CD4-positive, alpha-beta memory T cell (primary cell): ENCODE measurements at regions of chr5 and their contacts with region 1.

Region 1: GRCh38 chr5:56814963-56815658 is at the start of gene MAP3K1:
- DNase-seq: peak; percentile 82 to 91 (median 88)
- H3K4me3 ChIP-seq: peak within 1 kb of the TSS; percentile 78 to 87
- H3K4me3 Mint-ChIP-seq: peak within 1 kb of the TSS; percentile 92 to 97 (median 94)
- H3K27ac ChIP-seq: peak within 1 kb of the TSS; percentile 90
- H3K27ac Mint-ChIP-seq: peak within 1 kb of the TSS; percentile 94 to 99 (median 96)
- H3K4me1 ChIP-seq: peaks cover 37% of the 10 kb centered on the region
- H3K4me1 Mint-ChIP-seq: peaks cover 16 to 47% (median 26%) of the 10 kb centered on the region in 4 donors
- H3K27me3 ChIP-seq: no peaks in the 10 kb centered on the region
- H3K27me3 Mint-ChIP-seq: no peaks in the 10 kb centered on the region
- total RNA-seq, gene MAP3K1: 139 to 146 TPM

Region 2: DNA sequence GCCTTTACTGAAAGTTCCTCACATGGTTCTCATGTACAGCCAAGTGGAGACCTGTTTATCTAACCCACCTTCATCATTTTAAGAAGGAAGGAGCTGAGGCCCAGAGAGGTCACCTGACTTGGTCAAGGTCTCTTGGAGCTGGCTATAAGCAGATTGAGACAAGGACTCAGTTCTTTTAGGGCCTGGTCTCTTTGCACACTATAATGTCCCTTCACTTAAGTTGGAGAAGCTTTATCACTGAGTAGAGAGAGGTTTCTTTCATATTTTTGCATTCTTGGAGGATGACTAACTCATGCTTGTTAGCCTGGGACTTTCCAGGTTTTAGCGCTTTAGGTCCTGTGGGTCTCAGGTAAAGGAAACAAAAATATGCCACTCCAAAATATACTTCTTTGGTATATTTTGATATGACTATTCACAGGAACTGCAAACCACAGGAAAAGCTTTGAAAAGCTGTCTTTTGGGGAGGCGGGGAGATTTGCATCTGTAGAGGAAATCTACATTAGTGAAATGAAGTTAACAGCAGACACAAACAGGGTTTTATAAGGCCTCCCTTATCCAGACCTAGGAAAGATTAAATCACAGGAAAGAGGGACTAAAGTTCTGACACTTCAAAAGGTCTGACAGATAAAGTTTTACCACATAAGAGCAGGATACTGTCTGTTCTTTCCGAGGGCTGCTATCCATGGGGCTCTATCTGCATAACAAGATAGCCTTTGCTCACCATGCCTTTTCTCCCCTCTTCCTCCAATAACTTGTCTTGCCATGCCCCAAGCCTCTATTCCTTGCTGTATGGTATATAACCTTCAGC is 486.2 kb before region 1 on chr5:
- CTCF ChIA-PET with region 1: no interaction called
- POLR2A ChIA-PET with region 1: interaction called, 10 read pairs
- intact Hi-C with region 1: loop called (anchors 2 kb)
- DNase-seq: peak; percentile 50 to 82 (median 73)
- H3K4me3 ChIP-seq: no peak overlapping the region
- H3K4me3 Mint-ChIP-seq: peak overlapping the region; percentile 47 to 80 (median 61)
- H3K27ac ChIP-seq: peak overlapping the region; percentile 67
- H3K27ac Mint-ChIP-seq: peak overlapping the region; percentile 58 to 91 (median 76)
- H3K4me1 ChIP-seq: peaks cover 59% of the 10 kb centered on the region
- H3K4me1 Mint-ChIP-seq: peaks cover 45 to 69% (median 59%) of the 10 kb centered on the region in 4 donors
- H3K27me3 ChIP-seq: no peaks in the 10 kb centered on the region
- H3K27me3 Mint-ChIP-seq: no peaks in the 10 kb centered on the region

Region 3: GRCh38 chr5:56494300-56494731 is 320.8 kb before region 1 on chr5:
- CTCF ChIA-PET with region 1: no interaction called
- POLR2A ChIA-PET with region 1: no interaction called
- intact Hi-C with region 1: no loop called
- DNase-seq: no peak
- H3K4me3 ChIP-seq: no peak overlapping the region
- H3K4me3 Mint-ChIP-seq: no peak overlapping the region
- H3K27ac ChIP-seq: no peak overlapping the region
- H3K27ac Mint-ChIP-seq: no peak overlapping the region
- H3K4me1 ChIP-seq: peaks cover 32% of the 10 kb centered on the region
- H3K4me1 Mint-ChIP-seq: peaks cover 7 to 40% (median 21%) of the 10 kb centered on the region in 4 donors
- H3K27me3 ChIP-seq: no peaks in the 10 kb centered on the region
- H3K27me3 Mint-ChIP-seq: no peaks in the 10 kb centered on the region

Region 4: GRCh38 chr5:56670118-56670483 is 145.0 kb before region 1 on chr5:
- CTCF ChIA-PET with region 1: interaction called, 6 read pairs
- POLR2A ChIA-PET with region 1: interaction called, 12 read pairs
- intact Hi-C with region 1: no loop called
- DNase-seq: peak in 4 of 5 donors; percentile 26 to 67 (median 48)
- H3K4me3 ChIP-seq: no peak overlapping the region
- H3K4me3 Mint-ChIP-seq: peak overlapping the region in 7 of 8 donors; percentile 54 to 89 (median 76)
- H3K27ac ChIP-seq: peak overlapping the region; percentile 48
- H3K27ac Mint-ChIP-seq: peak overlapping the region; percentile 89 to 97 (median 93)
- H3K4me1 ChIP-seq: peaks cover 54% of the 10 kb centered on the region
- H3K4me1 Mint-ChIP-seq: peaks cover 23 to 52% (median 44%) of the 10 kb centered on the region in 4 donors
- H3K27me3 ChIP-seq: no peaks in the 10 kb centered on the region
- H3K27me3 Mint-ChIP-seq: no peaks in the 10 kb centered on the region

Region 5: DNA sequence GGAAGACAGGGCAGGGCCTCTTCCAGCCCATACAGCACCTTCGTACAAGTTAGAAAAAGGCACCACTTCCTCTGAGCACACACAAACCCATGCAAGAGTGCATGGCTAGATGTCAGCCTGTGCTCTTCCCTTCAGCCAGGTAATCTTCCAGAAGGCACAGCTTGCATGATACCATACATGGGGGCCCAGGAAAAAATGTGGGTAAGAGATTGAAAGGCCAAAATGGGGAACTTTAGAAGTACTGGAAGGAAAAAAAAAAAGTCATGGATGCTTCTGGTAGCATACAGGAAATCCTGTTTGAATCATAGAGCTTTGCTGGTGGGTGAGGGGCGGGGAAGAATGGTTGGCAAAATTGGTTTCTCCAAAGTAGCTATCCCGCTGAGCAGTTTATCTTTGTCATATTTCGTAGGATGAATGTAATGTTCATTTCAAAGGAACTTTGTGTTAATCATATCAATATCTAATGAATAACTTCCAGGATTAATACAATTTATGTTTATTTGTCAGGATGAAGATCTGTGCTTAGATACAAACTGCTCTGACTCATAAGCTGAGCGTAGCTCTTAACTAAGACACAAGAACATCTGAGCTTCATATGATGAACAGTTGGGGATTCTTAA is 78.0 kb before region 1 on chr5:
- CTCF ChIA-PET with region 1: interaction called, 6 read pairs
- POLR2A ChIA-PET with region 1: interaction called, 23 read pairs
- intact Hi-C with region 1: loop called (anchors 10 kb)
- DNase-seq: no peak
- H3K4me3 ChIP-seq: no peak overlapping the region
- H3K4me3 Mint-ChIP-seq: peak overlapping the region in 7 of 8 donors; percentile 49 to 85 (median 74)
- H3K27ac ChIP-seq: peak overlapping the region; percentile 45
- H3K27ac Mint-ChIP-seq: peak overlapping the region; percentile 73 to 97 (median 94)
- H3K4me1 ChIP-seq: peaks cover 55% of the 10 kb centered on the region
- H3K4me1 Mint-ChIP-seq: peaks cover 39 to 68% (median 56%) of the 10 kb centered on the region in 4 donors
- H3K27me3 ChIP-seq: no peaks in the 10 kb centered on the region
- H3K27me3 Mint-ChIP-seq: no peaks in the 10 kb centered on the region

Region 6: GRCh38 chr5:56852228-56853000 is 37.3 kb after region 1 on chr5:
- CTCF ChIA-PET with region 1: no interaction called
- POLR2A ChIA-PET with region 1: interaction called, 3 read pairs
- intact Hi-C with region 1: loop called (anchors 5 kb)
- DNase-seq: peak in 3 of 5 donors; percentile 20 to 35 (median 24)
- H3K4me3 ChIP-seq: no peak overlapping the region
- H3K4me3 Mint-ChIP-seq: peak overlapping the region; percentile 67 to 88 (median 74)
- H3K27ac ChIP-seq: peak overlapping the region; percentile 34
- H3K27ac Mint-ChIP-seq: peak overlapping the region in 6 of 7 donors; percentile 43 to 83 (median 74)
- H3K4me1 ChIP-seq: peaks cover 94% of the 10 kb centered on the region
- H3K4me1 Mint-ChIP-seq: peaks cover 64 to 94% (median 80%) of the 10 kb centered on the region in 4 donors
- H3K27me3 ChIP-seq: no peaks in the 10 kb centered on the region
- H3K27me3 Mint-ChIP-seq: no peaks in the 10 kb centered on the region

Region 7: GRCh38 chr5:56934325-56934724 is 119.2 kb after region 1 on chr5:
- CTCF ChIA-PET with region 1: no interaction called
- POLR2A ChIA-PET with region 1: no interaction called
- intact Hi-C with region 1: no loop called
- DNase-seq: no peak
- H3K4me3 ChIP-seq: no peak overlapping the region
- H3K4me3 Mint-ChIP-seq: no peak overlapping the region
- H3K27ac ChIP-seq: no peak overlapping the region
- H3K27ac Mint-ChIP-seq: no peak overlapping the region
- H3K4me1 ChIP-seq: no peaks in the 10 kb centered on the region
- H3K4me1 Mint-ChIP-seq: peaks cover 0 to 2% (median 0%) of the 10 kb centered on the region in 4 donors
- H3K27me3 ChIP-seq: no peaks in the 10 kb centered on the region
- H3K27me3 Mint-ChIP-seq: no peaks in the 10 kb centered on the region

Region 8: DNA sequence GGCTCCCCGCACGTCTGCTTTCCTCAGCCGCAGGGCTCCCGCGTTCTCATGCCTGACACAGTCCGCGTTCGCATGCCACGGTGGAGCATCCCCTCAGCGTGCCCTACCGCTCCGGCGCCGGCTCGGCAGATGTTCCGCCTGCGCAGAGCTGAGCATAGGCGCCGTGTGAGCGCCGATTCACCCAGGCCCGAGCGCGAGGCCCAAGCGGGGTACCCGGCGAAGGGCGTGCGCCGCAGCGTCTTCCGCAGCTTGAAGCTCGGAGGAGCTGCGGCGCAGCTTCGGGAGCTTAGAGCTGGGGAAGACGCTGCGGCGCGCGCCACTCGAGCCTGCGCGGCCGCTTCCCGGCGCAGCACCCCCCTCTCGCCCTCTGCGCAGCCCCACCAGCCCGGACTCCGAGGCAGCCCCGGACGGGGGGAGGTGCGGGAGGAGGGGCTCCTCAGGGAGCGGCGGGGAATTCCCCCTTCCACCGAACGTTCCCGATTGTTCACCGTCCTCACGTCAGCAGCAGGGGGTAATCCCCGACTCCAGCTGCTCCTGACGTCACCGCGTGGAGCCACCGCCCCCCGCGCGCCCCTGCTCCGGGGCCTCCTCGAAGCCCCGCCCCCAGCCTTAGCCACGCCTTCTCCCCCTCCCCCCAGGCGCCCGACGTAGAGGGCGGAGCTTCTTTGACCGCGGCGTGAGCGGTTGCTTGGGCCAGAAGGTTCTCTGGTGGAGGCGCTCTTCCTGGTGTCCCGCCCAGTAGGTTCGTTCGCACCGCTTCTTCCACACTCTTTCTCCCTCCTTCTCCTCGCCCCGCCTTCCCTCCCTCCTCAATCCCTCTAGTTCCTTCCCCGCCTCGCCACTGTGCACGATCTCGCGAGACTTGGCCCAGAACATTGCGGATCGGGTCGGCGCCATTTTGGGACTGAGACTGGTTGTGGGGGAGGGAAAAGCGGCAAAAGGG is 358.3 kb after region 1 on chr5 and contains the start of gene GPBP1:
- CTCF ChIA-PET with region 1: no interaction called
- POLR2A ChIA-PET with region 1: interaction called, 4 read pairs
- intact Hi-C with region 1: loop called (anchors 1 kb)
- DNase-seq: peak; percentile 98 to 99 (median 99)
- H3K4me3 ChIP-seq: peak within 1 kb of the TSS; percentile 70 to 87
- H3K4me3 Mint-ChIP-seq: peak within 1 kb of the TSS; percentile 96 to 99 (median 98)
- H3K27ac ChIP-seq: peak within 1 kb of the TSS; percentile 99
- H3K27ac Mint-ChIP-seq: peak within 1 kb of the TSS; percentile 98 to 100 (median 99)
- H3K4me1 ChIP-seq: peaks cover 37% of the 10 kb centered on the region
- H3K4me1 Mint-ChIP-seq: peaks cover 14 to 53% (median 25%) of the 10 kb centered on the region in 4 donors
- H3K27me3 ChIP-seq: no peaks in the 10 kb centered on the region
- H3K27me3 Mint-ChIP-seq: no peaks in the 10 kb centered on the region
- total RNA-seq, gene GPBP1: 136 to 137 TPM